ENCODE measurements at regions of chr3 and their contacts with region 1.

Region 1: GRCh38 chr3:136075218-136075808 is 109.8 kb downstream of the PPP2R3A start:
- DNase-seq: peak in 2 of 3 donors; percentile 57 to 85
- ATAC-seq: peak; percentile 80 to 83
- H3K4me3 ChIP-seq: no peak overlapping the region
- H3K27ac ChIP-seq: no peak overlapping the region
- H3K4me1 ChIP-seq: peaks cover 5% of the 10 kb centered on the region
- H3K27me3 ChIP-seq: no peaks in the 10 kb centered on the region

Region 2: DNA sequence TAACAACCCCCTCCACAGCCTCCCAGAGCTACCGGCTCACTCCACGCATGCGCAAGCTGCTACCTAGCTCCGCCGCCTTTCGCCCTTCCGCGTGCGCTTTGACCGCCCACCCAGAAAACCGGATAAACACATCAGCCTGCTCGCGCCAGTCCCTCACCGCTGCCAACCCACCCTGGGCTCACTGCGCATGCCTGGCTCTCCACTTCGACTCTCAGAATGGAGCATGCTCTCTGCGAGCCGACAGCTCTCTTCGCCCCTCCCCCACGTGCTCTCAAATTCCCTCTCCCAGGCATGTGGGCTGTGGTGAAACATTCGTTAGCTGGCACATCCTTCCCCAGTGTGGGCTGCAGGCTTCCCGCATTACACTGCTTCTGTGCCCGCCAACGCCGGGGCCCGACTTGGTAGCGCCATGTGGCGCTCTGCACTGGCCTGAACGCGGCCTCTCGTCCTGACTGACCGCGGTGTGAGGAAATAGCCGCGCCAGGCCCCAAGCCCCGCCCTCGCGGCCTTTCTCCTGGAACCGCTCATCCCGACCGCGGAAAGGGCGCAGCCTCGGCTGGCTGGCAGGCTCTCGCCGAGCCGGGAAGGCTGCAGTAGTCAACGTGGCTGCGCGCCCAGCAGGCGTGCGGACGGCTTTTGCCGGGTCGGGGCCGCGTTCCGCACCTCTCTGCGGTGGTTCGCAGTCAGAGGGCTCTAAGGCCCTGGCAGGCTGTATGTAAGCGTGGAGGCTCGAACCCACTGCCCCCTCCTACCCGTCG is 121.3 kb after region 1 on chr3:
- intact Hi-C with region 1: loop called in 1 of 4 experiments (anchors 10 kb)
- DNase-seq: peak; percentile 99 to 100 (median 99)
- ATAC-seq: peak; percentile 94 to 95
- H3K4me3 ChIP-seq: peak overlapping the region; percentile 91
- H3K27ac ChIP-seq: peak overlapping the region; percentile 96
- H3K4me1 ChIP-seq: no peaks in the 10 kb centered on the region
- H3K27me3 ChIP-seq: no peaks in the 10 kb centered on the region

Region 3: GRCh38 chr3:136250226-136250902 is 175.1 kb after region 1 on chr3 and contains the start of gene PCCB:
- intact Hi-C with region 1: loop called in 2 of 4 experiments (anchors 10 kb)
- DNase-seq: peak; percentile 96 to 99 (median 97)
- ATAC-seq: peak; percentile 99
- H3K4me3 ChIP-seq: peak within 1 kb of the TSS; percentile 64
- H3K27ac ChIP-seq: peak within 1 kb of the TSS; percentile 98
- H3K4me1 ChIP-seq: no peaks in the 10 kb centered on the region
- H3K27me3 ChIP-seq: no peaks in the 10 kb centered on the region
- total RNA-seq, gene PCCB: 69.3 to 78.6 (median 75.2) TPM

Region 4: GRCh38 chr3:136437043-136437442 is 361.7 kb after region 1 on chr3:
- intact Hi-C with region 1: no loop called
- DNase-seq: no peak
- ATAC-seq: no peak
- H3K4me3 ChIP-seq: no peak overlapping the region
- H3K27ac ChIP-seq: no peak overlapping the region
- H3K4me1 ChIP-seq: no peaks in the 10 kb centered on the region
- H3K27me3 ChIP-seq: no peaks in the 10 kb centered on the region

Region 5: GRCh38 chr3:137013955-137014688 is 938.8 kb after region 1 on chr3:
- intact Hi-C with region 1: loop called (anchors 5 kb)
- DNase-seq: peak; percentile 89 to 95 (median 94)
- ATAC-seq: peak; percentile 94 to 97
- H3K4me3 ChIP-seq: peak overlapping the region; percentile 82
- H3K27ac ChIP-seq: peak overlapping the region; percentile 82
- H3K4me1 ChIP-seq: no peaks in the 10 kb centered on the region
- H3K27me3 ChIP-seq: no peaks in the 10 kb centered on the region

Measured in right cardiac atrium (tissue), 5 donors.